IMR-90 (cell line): ENCODE measurements at regions of chr9 and their contacts with region 1.

Region 1: DNA sequence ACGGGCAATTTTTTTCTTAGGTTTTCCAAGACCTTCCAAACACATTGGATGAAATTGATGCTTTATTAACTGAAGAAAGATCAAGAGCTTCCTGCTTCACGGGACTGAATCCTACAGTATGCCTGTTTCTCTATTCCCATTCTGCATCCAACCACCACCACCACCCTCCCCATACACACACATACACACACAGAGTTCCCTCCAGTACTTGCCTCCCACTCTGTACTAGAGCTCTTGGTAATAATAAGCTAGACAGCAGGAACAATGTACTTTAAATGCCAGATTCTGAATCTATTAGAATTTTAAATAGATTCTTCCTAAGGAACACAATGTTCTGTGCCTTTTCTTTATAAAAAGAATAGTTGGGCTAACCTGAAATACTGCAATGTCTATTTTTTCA is 67.4 kb downstream of the KLF9 start:
- DNase-seq: no peak
- ATAC-seq: no peak
- H3K4me3 ChIP-seq: no peak overlapping the region
- H3K27ac ChIP-seq: no peak overlapping the region
- H3K4me1 ChIP-seq: no peaks in the 10 kb centered on the region
- H3K27me3 ChIP-seq: no peaks in the 10 kb centered on the region
- CTCF ChIP-seq: no peak
- POLR2A ChIP-seq: no peak
- RAD21 ChIP-seq: no peak

Region 2: DNA sequence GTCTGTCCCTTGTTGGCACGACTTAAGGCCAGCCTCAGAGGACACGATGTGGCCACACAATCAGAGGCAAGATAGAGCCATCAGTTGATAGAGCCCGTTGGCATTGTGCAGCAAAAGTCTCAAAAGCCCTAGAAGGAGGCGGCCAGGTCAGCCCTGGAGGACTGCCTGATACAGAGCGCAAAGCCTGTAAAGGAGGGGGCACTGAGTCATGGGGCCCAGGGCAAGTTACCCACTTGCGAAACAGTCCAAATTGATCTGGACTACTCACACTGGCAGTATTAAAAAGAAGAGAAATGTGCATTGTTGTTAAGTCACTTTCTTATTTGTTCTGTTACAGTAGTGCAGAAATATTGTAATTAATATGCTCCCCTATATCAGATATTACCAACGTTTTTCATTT is 15.9 kb after region 1 on chr9:
- CTCF ChIA-PET with region 1: no interaction called
- POLR2A ChIA-PET with region 1: no interaction called
- dilution Hi-C with region 1: no loop called
- in situ Hi-C with region 1: no loop called
- intact Hi-C with region 1: loop called (anchors 1 kb)
- DNase-seq: peak; percentile 32
- ATAC-seq: no peak; the same call in 1 of the 2 replicates
- H3K4me3 ChIP-seq: no peak overlapping the region
- H3K27ac ChIP-seq: no peak overlapping the region
- H3K4me1 ChIP-seq: no peaks in the 10 kb centered on the region
- H3K27me3 ChIP-seq: no peaks in the 10 kb centered on the region
- CTCF ChIP-seq: no peak
- POLR2A ChIP-seq: no peak
- RAD21 ChIP-seq: no peak

Region 3: DNA sequence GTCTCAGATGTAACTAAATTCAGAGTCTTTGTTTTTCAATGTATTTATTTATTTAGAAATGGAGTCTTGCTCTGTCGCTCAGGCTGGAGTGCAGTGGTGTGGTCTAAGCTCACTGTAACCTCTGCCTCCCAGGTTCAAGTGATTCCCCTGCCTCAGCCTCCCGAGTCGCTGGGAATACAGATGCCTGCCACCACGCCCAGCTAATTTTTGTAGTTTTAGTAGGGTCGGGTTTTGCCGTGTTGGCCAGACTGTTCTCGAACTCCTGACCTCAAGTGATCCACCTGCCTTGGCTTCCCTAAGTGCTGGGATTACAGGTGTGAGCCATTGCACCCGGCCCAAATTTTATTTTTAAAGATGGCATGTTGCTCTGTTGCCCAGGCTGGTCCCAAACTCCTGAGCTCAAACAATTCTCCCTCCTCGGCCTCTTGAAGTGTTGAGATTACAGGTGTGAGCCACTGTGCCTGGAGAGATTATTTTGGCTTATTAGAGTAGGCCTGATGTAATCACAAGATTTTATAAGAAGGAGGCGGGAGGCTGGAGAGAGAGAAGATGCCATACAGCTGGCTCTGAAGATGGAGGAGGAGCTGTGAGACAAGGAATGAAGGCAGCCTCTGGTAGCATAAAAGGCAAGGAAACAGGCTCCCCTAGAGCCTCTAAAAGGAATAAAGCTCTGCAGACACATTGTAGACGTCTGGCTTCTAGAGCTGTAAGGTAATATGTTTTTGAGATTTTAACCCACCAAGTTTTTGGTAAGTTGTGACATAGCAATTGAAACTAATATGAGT is 80.3 kb after region 1 on chr9:
- CTCF ChIA-PET with region 1: no interaction called
- POLR2A ChIA-PET with region 1: no interaction called
- dilution Hi-C with region 1: no loop called
- in situ Hi-C with region 1: no loop called
- intact Hi-C with region 1: no loop called
- DNase-seq: peak; percentile 58
- ATAC-seq: peak; percentile 78
- H3K4me3 ChIP-seq: no peak overlapping the region
- H3K27ac ChIP-seq: no peak overlapping the region
- H3K4me1 ChIP-seq: no peaks in the 10 kb centered on the region
- H3K27me3 ChIP-seq: no peaks in the 10 kb centered on the region
- CTCF ChIP-seq: peak; percentile 15; the same call in 1 of the 2 replicates
- POLR2A ChIP-seq: no peak
- RAD21 ChIP-seq: no peak

Region 4: DNA sequence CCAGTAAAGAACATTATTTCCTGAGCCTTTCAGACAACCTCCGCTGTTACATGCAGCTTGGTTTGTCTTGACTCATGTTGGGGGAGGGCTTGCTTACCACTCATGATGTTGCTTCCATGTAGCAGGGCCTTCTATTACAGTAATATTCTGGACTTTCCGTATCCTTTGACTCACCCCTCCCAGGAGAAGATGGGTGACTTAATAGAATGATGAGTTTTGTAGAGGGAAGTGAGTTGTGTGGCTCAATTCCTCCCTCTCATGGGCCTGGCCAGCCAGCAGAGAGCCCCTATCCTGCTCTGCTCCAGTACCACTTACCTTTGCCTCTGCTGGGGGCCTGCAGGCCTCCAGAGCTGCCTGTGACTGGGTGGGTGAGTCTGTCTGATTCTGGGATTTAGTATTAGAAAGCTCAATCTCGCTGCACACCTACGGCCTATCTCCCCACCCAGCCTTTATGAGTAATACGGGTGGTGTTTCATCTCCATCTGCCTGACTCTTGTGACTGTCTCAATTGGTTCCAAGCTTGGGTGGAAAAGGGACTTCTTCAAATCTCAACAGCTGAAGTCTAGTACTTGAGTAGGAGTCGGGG is 120.0 kb after region 1 on chr9:
- CTCF ChIA-PET with region 1: no interaction called
- POLR2A ChIA-PET with region 1: no interaction called
- dilution Hi-C with region 1: no loop called
- in situ Hi-C with region 1: no loop called
- intact Hi-C with region 1: no loop called
- DNase-seq: peak; percentile 92
- ATAC-seq: peak; percentile 64
- H3K4me3 ChIP-seq: no peak overlapping the region
- H3K27ac ChIP-seq: no peak overlapping the region
- H3K4me1 ChIP-seq: peaks cover 6% of the 10 kb centered on the region
- H3K27me3 ChIP-seq: no peaks in the 10 kb centered on the region
- CTCF ChIP-seq: no peak
- POLR2A ChIP-seq: no peak
- RAD21 ChIP-seq: peak; percentile 30